A673 (cell line): ENCODE measurements at regions of chr18 and their contacts with region 1.

Region 1: DNA sequence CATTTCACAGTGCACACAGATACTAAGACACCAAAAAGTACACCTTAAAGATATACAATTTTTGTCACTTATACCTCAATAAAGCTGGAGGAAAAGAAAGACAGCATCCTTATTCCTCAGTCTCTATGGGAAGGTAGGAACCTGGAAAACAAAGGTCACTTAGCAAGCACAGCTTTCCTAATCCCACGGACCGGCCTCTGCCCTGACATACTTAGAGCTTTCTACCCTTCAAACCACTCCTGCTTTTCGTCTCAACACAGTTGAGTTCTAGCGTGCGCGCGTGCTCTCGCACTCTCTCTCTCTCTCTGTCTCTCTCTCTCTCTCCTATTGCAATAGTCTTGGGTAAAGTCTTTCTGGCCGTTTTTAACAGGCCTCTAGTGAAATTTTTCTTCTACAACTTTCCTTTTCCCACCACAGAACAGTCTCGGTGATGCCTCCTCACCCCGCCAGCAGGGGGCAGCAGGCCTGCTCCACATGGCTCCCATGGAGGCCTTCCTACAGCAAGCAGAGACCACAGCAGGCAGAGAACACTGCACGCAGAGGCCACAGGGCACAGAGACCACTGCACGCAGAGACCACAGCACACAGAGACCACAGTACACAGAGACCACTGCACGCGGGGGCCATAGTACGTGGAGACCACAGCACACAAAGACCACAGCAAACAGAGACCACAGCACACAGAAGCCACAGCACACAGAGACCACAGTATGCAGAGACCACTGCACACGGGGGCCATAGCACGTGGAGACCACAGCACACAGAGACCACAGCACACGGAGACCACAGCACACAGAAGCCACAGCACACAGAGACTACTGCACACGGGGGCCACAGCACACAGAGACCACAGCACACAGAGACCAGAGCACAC is 106.9 kb downstream of the FBXO15 start:
- DNase-seq: peak; percentile 60
- H3K4me3 ChIP-seq: no peak overlapping the region
- H3K27ac ChIP-seq: no peak overlapping the region
- H3K4me1 ChIP-seq: no peaks in the 10 kb centered on the region
- H3K27me3 ChIP-seq: no peaks in the 10 kb centered on the region
- CTCF ChIP-seq: peak; percentile 80

Region 2: GRCh38 chr18:74116633-74117554 is 76.2 kb after region 1 on chr18:
- CTCF ChIA-PET with region 1: no interaction called
- POLR2A ChIA-PET with region 1: no interaction called
- intact Hi-C with region 1: loop called (anchors 5 kb)
- DNase-seq: peak; percentile 61
- H3K4me3 ChIP-seq: no peak overlapping the region
- H3K27ac ChIP-seq: no peak overlapping the region
- H3K4me1 ChIP-seq: peaks cover 4% of the 10 kb centered on the region
- H3K27me3 ChIP-seq: no peaks in the 10 kb centered on the region
- CTCF ChIP-seq: peak; percentile 75

Region 3: DNA sequence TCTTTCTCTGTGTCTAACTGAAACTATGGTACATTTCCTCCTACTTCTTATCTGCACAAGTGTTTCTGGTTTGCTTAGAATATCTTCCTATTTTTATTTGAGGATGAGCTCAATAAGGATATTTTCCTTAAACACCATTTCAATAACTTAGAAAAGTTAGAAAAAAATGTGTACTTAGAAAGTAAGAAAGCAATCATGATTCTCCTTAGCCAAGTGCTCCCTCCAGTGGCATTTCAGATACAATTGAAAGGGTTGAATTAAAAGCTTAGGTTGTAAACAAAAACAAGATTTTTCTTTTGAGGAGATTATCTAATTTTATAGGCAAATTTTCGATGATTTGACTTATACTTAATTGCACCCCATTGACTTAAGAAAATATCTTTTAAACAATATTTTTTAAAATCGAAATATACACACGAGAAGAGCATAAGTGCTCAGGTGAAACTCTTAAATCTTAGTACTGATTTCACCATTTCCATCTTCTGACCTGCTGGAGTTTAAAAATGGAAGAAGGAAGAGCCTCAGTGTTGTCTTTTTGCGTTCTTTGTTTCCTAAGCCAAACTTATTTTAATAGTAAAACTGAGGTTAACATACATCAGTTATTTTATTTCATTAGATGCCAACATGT is 301.8 kb after region 1 on chr18:
- CTCF ChIA-PET with region 1: no interaction called
- POLR2A ChIA-PET with region 1: no interaction called
- intact Hi-C with region 1: loop called (anchors 2 kb)
- DNase-seq: peak; percentile 52
- H3K4me3 ChIP-seq: no peak overlapping the region
- H3K27ac ChIP-seq: no peak overlapping the region
- H3K4me1 ChIP-seq: no peaks in the 10 kb centered on the region
- H3K27me3 ChIP-seq: no peaks in the 10 kb centered on the region
- CTCF ChIP-seq: peak; percentile 71